H1 (cell line): ENCODE measurements at regions of chr17 and their contacts with region 1.

Region 1: GRCh38 chr17:49707608-49708514 is at the start of gene SLC35B1:
- DNase-seq: peak; percentile 94 to 97
- H3K4me3 ChIP-seq: peak within 1 kb of the TSS; percentile 76 to 97 (median 90)
- H3K27ac ChIP-seq: peak within 1 kb of the TSS; percentile 100
- H3K4me1 ChIP-seq: peaks cover 2 to 3% (median 3%) of the 10 kb centered on the region in 4 experiments; a peak in 6 of 7 replicates
- H3K27me3 ChIP-seq: no peaks in the 10 kb centered on the region
- CTCF ChIP-seq: peak; percentile 90 to 95 (median 91)
- EP300 ChIP-seq: 0 out of 3 replicates have a peak, but pooled peaks of 1 of the 2 experiments have one; percentile 26
- POLR2A ChIP-seq: peak; percentile 79 to 88
- RAD21 ChIP-seq: peak; percentile 52 to 68
- total RNA-seq, gene SLC35B1: 56.5 and 60.0 TPM in 2 replicates

Region 2: DNA sequence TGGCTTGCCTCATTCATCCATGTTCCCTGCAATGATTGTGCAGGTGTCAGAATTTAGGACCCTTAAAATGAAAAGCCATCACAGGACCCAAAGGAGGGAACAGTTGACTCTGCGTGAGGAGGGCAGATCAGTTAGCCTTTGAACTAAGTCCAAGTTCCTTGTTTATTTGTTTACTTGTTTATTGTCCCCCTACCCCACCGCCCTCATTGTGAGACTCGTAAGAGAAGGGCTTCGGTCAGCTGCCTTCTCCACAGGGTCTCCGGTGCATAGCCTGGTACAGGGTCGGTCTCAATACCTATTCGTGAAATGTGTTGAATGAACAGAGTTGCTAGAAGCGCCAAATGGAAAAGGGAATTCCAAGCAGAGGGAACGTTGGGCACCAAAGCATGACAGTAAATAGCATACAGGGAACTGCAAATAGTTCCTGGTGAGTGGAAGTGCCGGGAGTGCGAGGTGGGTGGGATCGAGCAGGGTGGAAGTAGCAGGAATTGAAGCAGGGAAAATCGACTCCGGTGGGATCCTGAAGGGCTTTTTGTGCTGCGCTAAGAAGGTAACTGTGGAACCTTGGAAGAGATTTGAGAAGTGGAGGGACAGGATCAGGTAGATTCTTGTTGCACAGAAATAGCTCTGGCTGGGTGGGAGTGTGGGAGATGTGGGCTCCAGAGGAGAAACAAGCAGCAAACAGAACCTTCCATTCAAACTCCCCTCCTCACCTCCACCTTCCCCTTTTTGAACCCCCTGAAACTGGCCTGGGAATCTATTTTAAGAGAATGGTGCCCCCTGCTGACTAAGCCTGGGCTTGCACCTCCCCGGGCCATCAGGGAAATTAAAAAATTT is 12.8 kb before region 1 on chr17:
- CTCF ChIA-PET with region 1: interaction called, 38 read pairs
- POLR2A ChIA-PET with region 1: interaction called, 29 read pairs
- DNase-seq: peak in 1 of 2 experiments; percentile 90
- H3K4me3 ChIP-seq: peak overlapping the region in 1 of 4 experiments; percentile 2; a peak in 1 of 8 replicates
- H3K27ac ChIP-seq: no peak overlapping the region
- H3K4me1 ChIP-seq: peaks cover 0 to 2% (median under 1%) of the 10 kb centered on the region in 4 experiments; a peak in 4 of 7 replicates
- H3K27me3 ChIP-seq: no peaks in the 10 kb centered on the region; a peak in 1 of 7 replicates
- CTCF ChIP-seq: peak; percentile 60 to 90 (median 79)
- EP300 ChIP-seq: no peak
- POLR2A ChIP-seq: no peak
- RAD21 ChIP-seq: peak; percentile 91 to 97

Region 3: DNA sequence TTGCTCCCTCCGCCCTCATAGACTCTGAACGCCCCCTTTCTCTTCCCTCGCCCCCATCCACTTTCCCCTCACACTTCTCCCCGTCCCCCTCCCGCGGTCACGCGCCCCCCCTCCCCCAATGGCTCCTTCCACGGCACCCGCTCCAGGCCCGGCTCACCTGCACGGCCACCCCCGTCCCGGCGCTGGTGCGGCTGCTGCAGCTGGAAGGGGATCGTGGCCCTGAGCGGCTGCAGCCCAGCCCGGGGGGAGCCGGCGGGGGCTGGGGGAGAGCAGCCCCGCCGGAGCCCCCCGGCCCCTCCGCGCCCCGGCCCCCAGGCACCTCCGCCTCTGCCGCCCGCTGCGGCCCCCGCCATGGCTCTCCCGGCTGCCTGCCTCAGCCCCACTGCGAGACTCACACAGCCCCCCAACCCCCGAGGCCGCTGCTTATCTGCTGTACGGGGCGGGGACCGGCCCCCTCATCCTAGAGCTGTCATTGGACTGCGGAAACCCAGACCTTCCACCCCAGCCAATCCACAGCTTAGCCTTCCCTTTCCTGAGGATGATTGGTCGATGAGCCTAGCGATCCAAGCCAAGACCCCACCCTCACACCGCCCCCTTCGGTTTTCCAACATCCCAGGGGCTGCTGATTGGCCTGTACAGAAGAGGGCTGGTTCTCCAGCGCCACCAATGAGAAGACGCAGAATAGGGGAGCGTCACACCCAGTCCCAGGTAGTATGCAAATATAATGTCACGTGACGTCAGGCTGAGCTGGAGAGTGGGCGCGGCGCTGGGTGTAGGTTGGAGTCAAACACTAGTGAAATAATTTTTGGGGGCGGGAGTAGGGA is 56.1 kb after region 1 on chr17 and contains the start of gene FAM117A:
- CTCF ChIA-PET with region 1: interaction called, 4 read pairs
- POLR2A ChIA-PET with region 1: interaction called, 21 read pairs
- DNase-seq: peak; percentile 91 to 98
- H3K4me3 ChIP-seq: peak within 1 kb of the TSS; percentile 68 to 99 (median 80)
- H3K27ac ChIP-seq: peak within 1 kb of the TSS; percentile 21
- H3K4me1 ChIP-seq: peaks cover 0 to 18% (median 3%) of the 10 kb centered on the region in 4 experiments; a peak in 5 of 7 replicates
- H3K27me3 ChIP-seq: no peaks in the 10 kb centered on the region
- CTCF ChIP-seq: peak in 1 of 3 experiments; percentile 3; a peak in 1 of 4 replicates
- EP300 ChIP-seq: no peak
- POLR2A ChIP-seq: peak; percentile 83 to 89
- RAD21 ChIP-seq: no peak
- total RNA-seq, gene FAM117A: 25.3 and 28.4 TPM in 2 replicates

Region 4: DNA sequence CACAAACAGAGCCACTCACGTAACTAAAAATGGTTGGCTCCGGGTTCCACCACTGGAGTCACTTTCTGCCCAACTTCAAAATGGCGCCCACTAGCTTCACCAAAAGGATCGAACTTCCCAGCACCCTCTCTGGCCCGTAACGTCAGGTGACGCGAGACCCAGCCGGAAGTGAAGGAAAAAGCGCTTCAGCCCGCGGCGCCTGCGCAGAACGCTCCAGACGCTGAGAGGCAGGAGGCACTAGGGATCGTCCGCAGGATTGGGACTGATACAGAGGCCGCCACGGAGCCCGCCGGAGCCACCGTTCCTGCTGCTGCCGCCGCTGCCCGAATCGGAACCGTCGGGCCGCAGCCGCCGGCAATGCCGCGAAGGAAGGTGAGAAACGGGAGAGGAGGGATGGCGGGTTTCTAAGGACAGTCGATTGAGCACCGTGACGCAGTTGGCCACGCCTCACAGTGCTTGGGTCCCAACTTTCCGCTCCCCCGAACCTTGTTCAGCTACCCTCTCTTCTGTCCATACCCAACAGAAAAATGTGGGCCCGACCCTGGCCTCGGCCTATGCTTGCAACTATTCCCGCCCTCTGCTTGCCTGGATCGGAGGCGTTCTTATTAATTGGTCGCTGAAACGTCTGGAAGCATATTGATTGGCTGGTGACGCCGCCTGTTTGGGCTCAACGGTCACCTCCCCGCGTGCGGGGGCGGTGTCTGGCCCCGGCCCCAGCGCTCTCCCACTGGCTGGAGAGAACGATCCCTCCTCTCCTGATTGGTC is 80.8 kb after region 1 on chr17 and contains the start of gene KAT7:
- CTCF ChIA-PET with region 1: interaction called, 8 read pairs
- POLR2A ChIA-PET with region 1: interaction called, 20 read pairs
- DNase-seq: peak; percentile 97
- H3K4me3 ChIP-seq: peak within 1 kb of the TSS; percentile 96 to 100 (median 99)
- H3K27ac ChIP-seq: peak within 1 kb of the TSS; percentile 99
- H3K4me1 ChIP-seq: peaks cover 0 to 10% (median 1%) of the 10 kb centered on the region in 4 experiments; a peak in 3 of 7 replicates
- H3K27me3 ChIP-seq: peaks cover 0 to 3% (median 0%) of the 10 kb centered on the region in 4 experiments; a peak in 2 of 7 replicates
- CTCF ChIP-seq: no peak
- EP300 ChIP-seq: no peak
- POLR2A ChIP-seq: peak; percentile 95 to 97
- RAD21 ChIP-seq: no peak
- total RNA-seq, gene KAT7: 138 and 139 TPM in 2 replicates